ENCODE measurements at regions of chr19 and their contacts with region 1.

Region 1: GRCh38 chr19:47035127-47036096 is 13.0 kb downstream of the TMEM160 start:
- DNase-seq: peak; percentile 95
- H3K4me3 Mint-ChIP-seq: peak overlapping the region; percentile 75
- H3K27ac Mint-ChIP-seq: peak overlapping the region; percentile 37
- H3K4me1 Mint-ChIP-seq: peaks cover 22% of the 10 kb centered on the region
- H3K27me3 Mint-ChIP-seq: peaks cover 18% of the 10 kb centered on the region

Region 2: DNA sequence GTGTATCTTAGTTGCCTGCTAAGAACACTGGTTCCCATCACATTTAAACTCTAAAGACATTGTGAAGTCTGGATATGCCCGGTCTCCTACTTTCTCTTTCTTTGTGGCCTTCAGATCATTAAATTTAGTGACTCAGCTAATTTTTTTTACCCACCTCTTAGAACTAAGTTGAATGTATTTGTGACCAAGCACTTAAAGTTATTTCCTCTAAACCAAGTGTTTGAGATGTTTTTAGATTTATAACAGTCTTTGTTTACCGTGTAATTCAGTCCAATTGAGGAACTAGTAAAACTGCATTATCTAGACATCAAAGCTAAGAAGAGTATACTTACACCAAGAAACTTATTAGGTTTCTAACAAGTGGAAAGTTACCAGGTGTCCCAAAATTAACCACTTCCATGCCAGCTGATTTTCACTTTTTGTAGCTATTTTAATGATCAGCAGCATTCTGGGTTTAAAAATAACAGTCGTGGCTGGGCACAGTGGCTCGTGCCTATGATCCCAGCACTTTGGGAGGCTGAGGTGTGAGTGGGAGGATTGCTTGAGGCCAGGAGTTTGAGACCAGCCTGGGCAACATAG is 121.5 kb before region 1 on chr19:
- CTCF ChIA-PET with region 1: no interaction called
- POLR2A ChIA-PET with region 1: no interaction called
- DNase-seq: no peak
- H3K4me3 Mint-ChIP-seq: no peak overlapping the region
- H3K27ac Mint-ChIP-seq: no peak overlapping the region
- H3K4me1 Mint-ChIP-seq: peaks cover 52% of the 10 kb centered on the region
- H3K27me3 Mint-ChIP-seq: no peaks in the 10 kb centered on the region

Region 3: GRCh38 chr19:47047763-47048405 is 12.5 kb after region 1 on chr19:
- CTCF ChIA-PET with region 1: interaction called, 11 read pairs
- POLR2A ChIA-PET with region 1: interaction called, 7 read pairs
- DNase-seq: peak; percentile 86
- H3K4me3 Mint-ChIP-seq: peak overlapping the region; percentile 99
- H3K27ac Mint-ChIP-seq: peak overlapping the region; percentile 92
- H3K4me1 Mint-ChIP-seq: peaks cover 19% of the 10 kb centered on the region
- H3K27me3 Mint-ChIP-seq: no peaks in the 10 kb centered on the region

Region 4: DNA sequence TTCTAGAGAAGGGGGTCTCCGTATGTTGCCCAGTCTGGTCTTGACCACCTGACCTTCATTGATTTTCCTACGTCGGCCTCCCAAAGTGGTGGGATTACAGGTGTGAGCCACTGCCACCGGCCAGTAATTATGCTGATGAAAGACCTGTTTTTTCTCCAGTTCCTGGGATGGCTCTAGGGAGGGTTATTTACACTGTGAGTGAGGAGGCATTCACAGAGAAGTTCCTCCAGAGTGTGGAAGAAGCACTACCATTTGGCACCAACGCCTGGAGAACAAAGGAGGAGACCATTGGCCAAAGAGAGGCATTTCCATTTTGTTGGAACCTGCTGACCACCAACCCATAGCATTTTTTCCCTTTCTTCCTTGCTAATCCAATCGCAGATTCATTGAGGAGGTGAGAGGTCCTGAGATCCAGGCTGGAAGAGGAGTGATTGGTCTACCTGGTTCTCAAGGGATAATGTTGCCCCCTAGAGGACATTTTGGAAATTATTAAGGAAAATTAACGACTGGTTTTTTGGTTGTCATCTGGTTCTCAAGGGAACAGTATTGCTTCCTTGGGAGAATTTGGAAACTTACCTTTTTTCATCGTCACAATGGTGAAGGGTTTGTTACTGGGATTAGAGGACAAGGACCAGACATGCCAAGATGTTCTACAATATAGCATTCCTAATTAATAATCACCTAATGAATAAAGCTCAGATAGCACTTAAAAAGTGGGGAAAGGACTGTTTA is 89.7 kb after region 1 on chr19:
- CTCF ChIA-PET with region 1: interaction called, 29 read pairs
- POLR2A ChIA-PET with region 1: no interaction called
- DNase-seq: peak; percentile 22
- H3K4me3 Mint-ChIP-seq: no peak overlapping the region
- H3K27ac Mint-ChIP-seq: no peak overlapping the region
- H3K4me1 Mint-ChIP-seq: peaks cover 7% of the 10 kb centered on the region
- H3K27me3 Mint-ChIP-seq: peaks cover 2% of the 10 kb centered on the region

Region 5: GRCh38 chr19:47143322-47144073 is 108.1 kb after region 1 on chr19:
- CTCF ChIA-PET with region 1: interaction called, 10 read pairs
- POLR2A ChIA-PET with region 1: no interaction called
- DNase-seq: no peak
- H3K4me3 Mint-ChIP-seq: no peak overlapping the region
- H3K27ac Mint-ChIP-seq: peak overlapping the region; percentile 21
- H3K4me1 Mint-ChIP-seq: peaks cover 55% of the 10 kb centered on the region
- H3K27me3 Mint-ChIP-seq: no peaks in the 10 kb centered on the region

Measured in activated CD4-positive, alpha-beta memory T cell treated with anti-CD3 and anti-CD28 coated beads, Interleukin-2, amount 10 ng/mL, durations not matched to agents 7 days and 5 days (primary cell).